ENCODE measurements at regions of chr19 and their contacts with region 1.

Region 1: DNA sequence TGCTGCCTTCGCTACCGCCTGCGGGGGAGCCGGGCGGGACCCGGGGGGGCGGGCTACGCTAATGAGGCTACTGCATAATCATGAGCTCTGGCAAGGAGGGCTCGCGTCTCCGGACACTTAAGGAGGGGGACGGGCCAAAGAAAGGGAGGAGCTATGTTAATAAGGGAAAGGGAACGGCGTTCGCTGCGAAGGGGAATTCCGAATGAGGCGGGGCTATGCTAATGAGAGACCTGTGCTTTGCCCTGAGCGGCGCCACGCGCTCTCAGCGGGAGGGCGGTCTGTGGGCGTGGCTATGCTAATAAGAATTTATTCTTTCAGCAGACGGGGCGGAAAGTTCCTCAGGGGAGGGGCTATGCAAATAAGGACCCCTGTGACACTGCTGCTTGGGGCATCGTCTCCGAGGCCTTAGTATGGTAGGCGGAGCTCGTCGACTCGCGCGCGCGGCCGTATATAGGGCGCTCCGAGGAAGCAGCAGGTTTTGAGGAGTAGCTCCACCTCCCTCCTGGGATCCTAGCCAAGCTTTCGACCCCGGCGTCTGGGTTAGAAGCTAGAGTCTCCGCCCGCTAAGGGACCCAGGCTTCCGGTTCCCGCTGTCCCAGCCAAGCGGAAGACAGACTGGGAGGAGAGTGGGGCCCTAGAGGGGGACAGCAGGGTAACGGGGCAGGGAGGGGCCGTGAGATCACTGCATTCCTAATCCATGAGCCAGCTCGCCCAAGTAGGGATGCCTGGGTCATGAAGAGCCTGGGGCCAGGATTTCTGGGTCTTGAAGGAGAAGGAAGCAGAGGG is at the start of gene RRAS:
- DNase-seq: peak; percentile 96 to 100 (median 99)
- ATAC-seq: peak; percentile 71 to 76 (median 74)
- H3K4me3 ChIP-seq: peak within 1 kb of the TSS; percentile 72 to 74
- H3K4me3 Mint-ChIP-seq: peak within 1 kb of the TSS; percentile 88 to 96 (median 95)
- H3K27ac ChIP-seq: peak within 1 kb of the TSS; percentile 92
- H3K27ac Mint-ChIP-seq: peak within 1 kb of the TSS; percentile 97
- H3K4me1 ChIP-seq: peaks cover 16 to 58% of the 10 kb centered on the region in 2 experiments
- H3K4me1 Mint-ChIP-seq: peaks cover 56 to 68% (median 67%) of the 10 kb centered on the region in 3 donors
- H3K27me3 ChIP-seq: no peaks in the 10 kb centered on the region
- H3K27me3 Mint-ChIP-seq: no peaks in the 10 kb centered on the region
- total RNA-seq, gene RRAS: 8.5 to 15.4 (median 13.0) TPM

Region 2: DNA sequence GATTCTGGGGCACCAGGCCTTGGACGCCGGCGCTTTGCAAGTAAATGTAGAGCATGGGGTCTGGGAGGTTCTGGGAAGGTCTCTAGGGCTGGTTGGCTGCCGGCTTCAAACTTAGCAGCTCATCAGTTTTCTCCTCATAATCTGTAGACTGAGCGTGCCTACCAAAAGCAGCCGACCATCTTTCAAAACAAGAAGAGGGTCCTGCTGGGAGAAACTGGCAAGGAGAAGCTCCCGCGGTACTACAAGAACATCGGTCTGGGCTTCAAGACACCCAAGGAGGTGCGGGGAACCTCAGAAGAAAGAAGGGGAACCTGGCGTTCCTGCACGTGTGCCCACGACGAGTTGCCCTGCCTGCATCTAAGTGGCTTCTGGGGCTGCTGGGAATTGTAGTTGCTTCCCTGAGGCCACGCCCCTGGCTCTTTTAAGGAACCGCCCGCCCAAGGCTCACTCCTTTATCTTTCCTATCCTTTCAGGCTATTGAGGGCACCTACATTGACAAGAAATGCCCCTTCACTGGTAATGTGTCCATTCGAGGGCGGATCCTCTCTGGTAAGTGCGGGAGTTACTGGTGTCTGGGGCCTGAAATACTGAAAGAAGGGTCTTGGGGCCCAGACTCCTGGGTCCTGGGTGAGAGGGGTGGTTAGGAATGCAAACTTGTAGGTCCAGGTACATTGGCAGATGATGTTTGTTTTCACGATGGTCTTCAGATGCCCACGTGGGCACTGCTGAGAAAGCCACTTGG is 143.1 kb before region 1 on chr19:
- CTCF ChIA-PET with region 1: no interaction called
- POLR2A ChIA-PET with region 1: interaction called, 4 to 11 read pairs
- DNase-seq: peak; percentile 57 to 87 (median 76)
- ATAC-seq: peak in 2 of 4 experiments; percentile 3 to 12
- H3K4me3 ChIP-seq: peak overlapping the region; percentile 78 to 92
- H3K4me3 Mint-ChIP-seq: peak overlapping the region; percentile 99 to 100 (median 100)
- H3K27ac ChIP-seq: peak overlapping the region; percentile 92
- H3K27ac Mint-ChIP-seq: peak overlapping the region; percentile 95 to 100
- H3K4me1 ChIP-seq: peaks cover 14 to 67% of the 10 kb centered on the region in 2 experiments
- H3K4me1 Mint-ChIP-seq: peaks cover 58 to 66% (median 66%) of the 10 kb centered on the region in 3 donors
- H3K27me3 ChIP-seq: no peaks in the 10 kb centered on the region
- H3K27me3 Mint-ChIP-seq: no peaks in the 10 kb centered on the region

Region 3: GRCh38 chr19:49665351-49666119 is 25.2 kb after region 1 on chr19 and contains the starts of genes BCL2L12 and IRF3:
- CTCF ChIA-PET with region 1: interaction called in 1 of 2 experiments, 30 read pairs
- POLR2A ChIA-PET with region 1: interaction called in 1 of 2 experiments, 6 read pairs
- DNase-seq: peak; percentile 97 to 100 (median 99)
- ATAC-seq: peak; percentile 81 to 85 (median 82)
- H3K4me3 ChIP-seq: peak within 1 kb of the TSS; percentile 93
- H3K4me3 Mint-ChIP-seq: peak within 1 kb of the TSS; percentile 93 to 100 (median 99)
- H3K27ac ChIP-seq: peak within 1 kb of the TSS; percentile 78
- H3K27ac Mint-ChIP-seq: peak within 1 kb of the TSS; percentile 100
- H3K4me1 ChIP-seq: peaks cover 4 to 46% of the 10 kb centered on the region in 2 experiments
- H3K4me1 Mint-ChIP-seq: peaks cover 36 to 48% (median 37%) of the 10 kb centered on the region in 3 donors
- H3K27me3 ChIP-seq: no peaks in the 10 kb centered on the region
- H3K27me3 Mint-ChIP-seq: no peaks in the 10 kb centered on the region
- total RNA-seq, gene BCL2L12: 15.6 to 26.6 (median 24.1) TPM
- total RNA-seq, gene IRF3: 191 to 376 (median 350) TPM

Region 4: GRCh38 chr19:49676690-49677231 is 36.5 kb after region 1 on chr19:
- CTCF ChIA-PET with region 1: interaction called in 1 of 2 experiments, 26 read pairs
- POLR2A ChIA-PET with region 1: interaction called in 1 of 2 experiments, 10 read pairs
- DNase-seq: peak; percentile 93 to 100 (median 96)
- ATAC-seq: peak; percentile 76 to 78 (median 78)
- H3K4me3 ChIP-seq: peak overlapping the region; percentile 88 to 97
- H3K4me3 Mint-ChIP-seq: peak overlapping the region; percentile 94 to 100 (median 97)
- H3K27ac ChIP-seq: peak overlapping the region; percentile 99
- H3K27ac Mint-ChIP-seq: peak overlapping the region; percentile 97 to 100
- H3K4me1 ChIP-seq: peaks cover 4 to 53% of the 10 kb centered on the region in 2 experiments
- H3K4me1 Mint-ChIP-seq: peaks cover 36 to 51% (median 43%) of the 10 kb centered on the region in 3 donors
- H3K27me3 ChIP-seq: no peaks in the 10 kb centered on the region
- H3K27me3 Mint-ChIP-seq: no peaks in the 10 kb centered on the region